ENCODE measurements at regions of chr15 and their contacts with region 1.

Region 1: GRCh38 chr15:82809404-82810060 is at the start of gene WHAMM:
- DNase-seq: peak; percentile 100
- ATAC-seq: peak; percentile 79 to 83
- H3K4me3 ChIP-seq: peak within 1 kb of the TSS; percentile 69 to 86 (median 79)
- H3K27ac ChIP-seq: peak within 1 kb of the TSS; percentile 92 to 99 (median 96)
- H3K4me1 ChIP-seq: peaks cover 49 to 60% of the 10 kb centered on the region in 2 donors
- H3K27me3 ChIP-seq: no peaks in the 10 kb centered on the region
- CTCF ChIP-seq: peak in 2 of 5 experiments; percentile 15 to 29
- POLR2A ChIP-seq: peak; percentile 99
- total RNA-seq, gene WHAMM: 14.1 to 22.1 (median 21.8) TPM

Region 2: GRCh38 chr15:82046666-82047452 is 762.7 kb before region 1 on chr15:
- in situ Hi-C with region 1: no loop called
- intact Hi-C with region 1: loop called (anchors 10 kb)
- DNase-seq: peak; percentile 78 to 87
- ATAC-seq: peak; percentile 68 to 73
- H3K4me3 ChIP-seq: peak overlapping the region; percentile 76 to 96 (median 86)
- H3K27ac ChIP-seq: peak overlapping the region; percentile 92 to 94 (median 92)
- H3K4me1 ChIP-seq: peaks cover 8 to 13% of the 10 kb centered on the region in 2 donors
- H3K27me3 ChIP-seq: peaks cover 0 to 6% (median 0%) of the 10 kb centered on the region in 3 donors
- CTCF ChIP-seq: peak; percentile 53 to 92 (median 82)
- POLR2A ChIP-seq: peak; percentile 79 to 85

Region 3: GRCh38 chr15:82647045-82647834 is 162.3 kb before region 1 on chr15 and contains the start of gene CPEB1:
- in situ Hi-C with region 1: no loop called
- intact Hi-C with region 1: loop called (anchors 10 kb)
- DNase-seq: peak; percentile 24 to 44
- ATAC-seq: peak; percentile 79 to 80
- H3K4me3 ChIP-seq: peak within 1 kb of the TSS; percentile 52 to 83 (median 63)
- H3K27ac ChIP-seq: peak within 1 kb of the TSS in 3 of 4 donors; percentile 33 to 42 (median 36)
- H3K4me1 ChIP-seq: peaks cover 12 to 17% of the 10 kb centered on the region in 2 donors
- H3K27me3 ChIP-seq: peaks cover 26 to 50% (median 38%) of the 10 kb centered on the region in 3 donors
- CTCF ChIP-seq: peak in 1 of 5 experiments; percentile 16
- POLR2A ChIP-seq: peak in 1 of 2 donors; percentile 31
- total RNA-seq, gene CPEB1: 0.69 to 3.9 (median 2.7) TPM

Region 4: DNA sequence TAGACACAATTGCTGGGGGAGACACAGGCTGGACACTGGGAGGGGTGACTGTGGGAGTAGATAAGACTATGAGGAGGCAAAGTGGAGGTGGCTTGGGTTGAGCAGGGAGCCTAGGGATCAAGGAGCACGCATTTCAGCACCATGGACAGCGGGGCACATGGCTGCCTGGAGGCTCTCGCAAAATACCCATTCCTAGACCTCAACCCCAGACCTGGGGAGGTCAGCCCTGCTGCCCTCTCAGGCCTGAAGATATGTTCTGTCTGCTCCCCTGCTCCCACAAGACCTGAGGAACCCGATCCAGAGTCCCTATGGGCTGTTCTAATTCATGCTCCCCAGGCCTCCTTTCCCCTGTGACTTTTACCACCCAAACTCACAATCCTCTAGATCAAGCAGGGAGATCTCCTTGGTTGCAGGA is 146.3 kb before region 1 on chr15:
- in situ Hi-C with region 1: no loop called
- intact Hi-C with region 1: no loop called
- DNase-seq: no peak
- ATAC-seq: no peak
- H3K4me3 ChIP-seq: no peak overlapping the region
- H3K27ac ChIP-seq: no peak overlapping the region
- H3K4me1 ChIP-seq: no peaks in the 10 kb centered on the region
- H3K27me3 ChIP-seq: no peaks in the 10 kb centered on the region
- CTCF ChIP-seq: no peak
- POLR2A ChIP-seq: no peak

Region 5: DNA sequence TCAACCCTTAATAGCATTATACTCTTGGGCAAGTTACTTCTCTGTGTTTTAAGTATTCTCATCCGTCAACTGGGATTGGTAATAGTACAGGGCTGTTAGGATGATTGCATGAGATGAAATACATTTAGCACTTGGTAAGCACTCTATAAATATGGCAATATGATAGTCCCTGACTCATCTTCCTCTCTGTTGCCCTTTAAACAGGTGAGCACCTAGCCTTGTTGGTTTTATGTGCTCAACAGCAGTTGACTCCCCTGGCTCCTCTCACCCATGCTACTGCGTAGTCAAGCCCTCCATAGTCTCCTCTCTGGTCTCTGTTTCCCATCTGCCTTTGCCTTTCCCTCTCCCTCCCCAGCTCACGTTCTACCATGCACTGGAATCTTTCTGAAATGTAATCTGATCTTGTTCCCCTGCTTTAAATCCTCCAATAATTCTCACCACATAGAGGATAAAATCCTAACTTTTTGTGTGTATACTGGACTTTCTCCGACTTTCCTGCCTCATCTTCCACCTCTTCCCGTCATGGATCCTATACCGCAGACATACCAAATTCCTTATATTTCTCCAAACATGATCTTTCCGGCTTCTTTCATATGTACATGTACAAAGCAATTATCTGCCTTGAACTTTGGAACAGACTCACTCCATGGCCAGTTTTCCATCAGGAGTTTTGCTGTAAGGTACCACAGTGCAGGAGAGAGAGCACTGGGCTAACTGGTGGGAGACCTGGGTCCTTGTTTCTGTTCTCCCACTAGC is 46.0 kb before region 1 on chr15:
- in situ Hi-C with region 1: loop called in 2 of 4 experiments (anchors 5 to 10 kb)
- intact Hi-C with region 1: loop called (anchors 2 kb)
- DNase-seq: peak; percentile 65 to 81
- ATAC-seq: peak; percentile 85 to 92
- H3K4me3 ChIP-seq: no peak overlapping the region
- H3K27ac ChIP-seq: peak overlapping the region; percentile 88 to 96 (median 92)
- H3K4me1 ChIP-seq: peaks cover 50 to 81% of the 10 kb centered on the region in 2 donors
- H3K27me3 ChIP-seq: no peaks in the 10 kb centered on the region
- CTCF ChIP-seq: no peak
- POLR2A ChIP-seq: peak; percentile 75 to 84

Region 6: GRCh38 chr15:82919231-82919886 is 109.8 kb after region 1 on chr15:
- in situ Hi-C with region 1: no loop called
- intact Hi-C with region 1: loop called (anchors 5 kb)
- DNase-seq: peak; percentile 56 to 72
- ATAC-seq: peak in 1 of 2 donors; percentile 40
- H3K4me3 ChIP-seq: no peak overlapping the region
- H3K27ac ChIP-seq: peak overlapping the region; percentile 90 to 94 (median 92)
- H3K4me1 ChIP-seq: peaks cover 55 to 81% of the 10 kb centered on the region in 2 donors
- H3K27me3 ChIP-seq: no peaks in the 10 kb centered on the region
- CTCF ChIP-seq: no peak
- POLR2A ChIP-seq: no peak

Region 7: DNA sequence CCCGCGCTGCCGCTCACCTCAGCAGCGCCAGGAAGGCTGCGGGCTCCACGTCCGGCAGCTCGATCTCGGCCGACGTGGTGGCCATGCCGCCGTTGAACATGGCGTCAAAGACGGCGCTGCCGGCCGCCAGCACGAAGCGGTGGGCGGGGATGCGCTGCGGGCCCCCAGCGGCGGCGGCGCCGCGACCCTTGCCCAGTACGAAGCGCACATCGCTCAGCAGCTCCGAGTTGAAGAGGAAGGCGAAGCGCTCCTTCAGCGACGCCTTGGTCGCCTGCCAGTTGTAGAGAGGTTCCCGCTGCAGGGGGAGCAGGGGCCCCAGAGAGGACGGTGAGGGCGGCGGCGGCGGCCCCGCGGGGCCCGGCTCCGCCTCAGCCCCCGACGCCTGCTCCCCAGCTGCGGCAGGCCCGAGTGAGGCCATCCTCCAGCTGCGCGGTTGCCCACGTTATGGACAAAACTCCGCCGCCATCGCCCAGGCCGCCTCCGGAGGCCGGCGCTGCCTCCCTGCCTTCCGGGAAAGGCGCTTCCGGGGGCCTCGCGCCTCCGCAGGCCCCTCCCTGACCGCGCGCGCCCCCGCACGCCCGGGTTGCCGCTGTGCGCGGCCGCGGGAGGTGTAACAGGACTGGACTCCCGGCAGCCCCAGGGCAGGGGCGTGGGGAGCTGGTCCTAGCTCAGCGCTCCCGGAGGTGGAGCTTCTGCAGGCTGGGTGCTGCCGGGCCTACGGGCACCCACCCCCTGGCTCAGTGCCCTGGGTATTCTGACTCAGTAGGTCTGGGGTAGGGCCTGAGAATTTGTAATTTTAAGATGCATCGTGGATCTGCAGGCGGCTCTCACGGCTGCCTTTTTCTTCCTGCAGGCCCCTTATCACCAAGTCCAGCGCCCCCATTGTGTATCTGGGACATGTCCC is 257.5 kb after region 1 on chr15 and contains the start of gene BTBD1:
- in situ Hi-C with region 1: no loop called
- intact Hi-C with region 1: loop called (anchors 5 kb)
- DNase-seq: peak; percentile 81 to 93
- ATAC-seq: peak; percentile 76 to 81
- H3K4me3 ChIP-seq: peak within 1 kb of the TSS; percentile 78 to 84 (median 80)
- H3K27ac ChIP-seq: peak within 1 kb of the TSS; percentile 87 to 98 (median 96)
- H3K4me1 ChIP-seq: peaks cover 33 to 40% of the 10 kb centered on the region in 2 donors
- H3K27me3 ChIP-seq: no peaks in the 10 kb centered on the region
- CTCF ChIP-seq: peak in 2 of 5 experiments; percentile 9 to 24
- POLR2A ChIP-seq: peak; percentile 98
- total RNA-seq, gene BTBD1: 229 to 408 (median 342) TPM